B cell (primary cell): ENCODE measurements at regions of chr12 and their contacts with region 1.

Region 1: GRCh38 chr12:106247674-106248311 is at the start of gene CKAP4:
- DNase-seq: peak; percentile 80
- ATAC-seq: peak; percentile 61
- H3K4me3 ChIP-seq: peak within 1 kb of the TSS; percentile 53 to 77 (median 71)
- H3K4me3 Mint-ChIP-seq: peak within 1 kb of the TSS; percentile 85
- H3K27ac ChIP-seq: peak within 1 kb of the TSS; percentile 73 to 85
- H3K27ac Mint-ChIP-seq: peak within 1 kb of the TSS; percentile 88
- H3K4me1 ChIP-seq: peaks cover 36 to 52% of the 10 kb centered on the region in 2 donors
- H3K4me1 Mint-ChIP-seq: peaks cover 58% of the 10 kb centered on the region
- H3K27me3 ChIP-seq: peaks cover 0 to 16% (median 4%) of the 10 kb centered on the region in 4 experiments
- H3K27me3 Mint-ChIP-seq: no peaks in the 10 kb centered on the region
- CTCF ChIP-seq: no peak
- total RNA-seq, gene CKAP4: 27.3 and 29.2 TPM in 2 replicates

Region 2: GRCh38 chr12:106170285-106170684 is 77.5 kb before region 1 on chr12:
- CTCF ChIA-PET with region 1: no interaction called
- POLR2A ChIA-PET with region 1: no interaction called
- intact Hi-C with region 1: no loop called
- DNase-seq: no peak
- ATAC-seq: no peak
- H3K4me3 ChIP-seq: no peak overlapping the region
- H3K4me3 Mint-ChIP-seq: no peak overlapping the region
- H3K27ac ChIP-seq: no peak overlapping the region
- H3K27ac Mint-ChIP-seq: no peak overlapping the region
- H3K4me1 ChIP-seq: no peaks in the 10 kb centered on the region
- H3K4me1 Mint-ChIP-seq: no peaks in the 10 kb centered on the region
- H3K27me3 ChIP-seq: no peaks in the 10 kb centered on the region
- H3K27me3 Mint-ChIP-seq: peaks cover 17% of the 10 kb centered on the region
- CTCF ChIP-seq: no peak

Region 3: DNA sequence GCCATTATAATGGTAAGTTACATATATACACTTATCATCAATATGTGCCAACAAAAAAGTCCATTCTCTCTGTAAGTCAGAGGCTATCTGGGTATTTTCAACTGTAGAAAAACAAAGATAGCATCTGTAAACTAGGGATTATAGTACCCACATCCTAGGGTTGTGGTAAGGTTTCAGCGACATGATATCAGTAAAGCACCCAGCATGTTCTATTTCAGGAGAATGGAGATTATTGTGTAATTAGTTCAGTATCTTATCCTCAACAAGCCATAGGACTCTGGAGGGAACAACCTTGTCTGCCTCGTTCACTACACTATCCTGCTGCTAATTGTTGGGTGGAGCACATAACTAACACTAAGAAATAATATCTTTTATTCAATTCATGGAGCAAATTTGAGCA is 19.7 kb after region 1 on chr12:
- CTCF ChIA-PET with region 1: interaction called, 4 read pairs
- POLR2A ChIA-PET with region 1: interaction called, 4 read pairs
- intact Hi-C with region 1: loop called (anchors 2 kb)
- DNase-seq: no peak
- ATAC-seq: no peak
- H3K4me3 ChIP-seq: no peak overlapping the region
- H3K4me3 Mint-ChIP-seq: no peak overlapping the region
- H3K27ac ChIP-seq: no peak overlapping the region
- H3K27ac Mint-ChIP-seq: no peak overlapping the region
- H3K4me1 ChIP-seq: no peaks in the 10 kb centered on the region
- H3K4me1 Mint-ChIP-seq: no peaks in the 10 kb centered on the region
- H3K27me3 ChIP-seq: peaks cover 0 to 15% (median 4%) of the 10 kb centered on the region in 4 experiments
- H3K27me3 Mint-ChIP-seq: peaks cover under 1% of the 10 kb centered on the region
- CTCF ChIP-seq: no peak

Region 4: DNA sequence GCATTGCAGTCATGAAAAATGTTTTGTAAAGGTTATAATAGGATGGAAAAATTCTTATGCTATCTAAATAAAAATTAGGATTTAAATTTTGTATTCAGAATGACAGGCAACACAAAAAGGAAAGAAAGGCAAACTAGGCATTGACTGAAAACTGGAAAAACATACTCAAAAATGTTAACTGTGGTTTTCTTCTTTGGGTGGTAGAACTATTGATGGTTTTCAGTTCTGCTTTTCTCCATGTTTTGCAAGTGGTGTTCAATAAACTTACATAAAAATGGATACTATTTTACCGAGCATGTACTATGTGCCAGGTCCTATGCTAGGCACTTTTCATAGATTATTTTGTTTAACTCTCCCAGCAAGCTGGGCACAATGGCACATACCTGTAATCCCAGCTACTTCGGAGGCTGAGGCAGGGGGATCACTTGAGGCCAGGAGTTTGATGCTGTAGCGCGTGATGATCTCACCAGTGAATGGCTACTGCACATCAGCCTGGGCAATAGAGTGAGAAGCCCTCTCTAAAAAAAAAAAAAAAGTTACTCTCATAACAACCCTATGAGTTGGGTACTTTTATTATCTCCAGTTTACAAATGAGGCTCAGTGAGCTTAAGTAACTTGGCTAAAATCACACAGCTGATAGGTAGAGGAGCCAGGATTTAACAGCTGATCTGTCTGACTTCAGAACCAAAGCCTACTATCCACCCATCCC is 28.4 kb after region 1 on chr12:
- CTCF ChIA-PET with region 1: interaction called, 25 read pairs
- POLR2A ChIA-PET with region 1: interaction called, 5 read pairs
- intact Hi-C with region 1: loop called (anchors 1 kb)
- DNase-seq: peak; percentile 20
- ATAC-seq: peak; percentile 93
- H3K4me3 ChIP-seq: peak overlapping the region in 3 of 5 experiments; percentile 13 to 45 (median 28)
- H3K4me3 Mint-ChIP-seq: peak overlapping the region; percentile 89
- H3K27ac ChIP-seq: no peak overlapping the region
- H3K27ac Mint-ChIP-seq: peak overlapping the region; percentile 96
- H3K4me1 ChIP-seq: peaks cover 18 to 19% of the 10 kb centered on the region in 2 donors
- H3K4me1 Mint-ChIP-seq: peaks cover 41% of the 10 kb centered on the region
- H3K27me3 ChIP-seq: no peaks in the 10 kb centered on the region
- H3K27me3 Mint-ChIP-seq: no peaks in the 10 kb centered on the region
- CTCF ChIP-seq: no peak

Region 5: GRCh38 chr12:106282457-106283097 is 34.8 kb after region 1 on chr12:
- CTCF ChIA-PET with region 1: interaction called, 58 read pairs
- POLR2A ChIA-PET with region 1: interaction called, 4 read pairs
- intact Hi-C with region 1: loop called (anchors 1 kb)
- DNase-seq: peak; percentile 75
- ATAC-seq: peak; percentile 82
- H3K4me3 ChIP-seq: no peak overlapping the region
- H3K4me3 Mint-ChIP-seq: no peak overlapping the region
- H3K27ac ChIP-seq: no peak overlapping the region
- H3K27ac Mint-ChIP-seq: peak overlapping the region; percentile 2
- H3K4me1 ChIP-seq: peaks cover 7 to 8% of the 10 kb centered on the region in 2 donors
- H3K4me1 Mint-ChIP-seq: peaks cover 37% of the 10 kb centered on the region
- H3K27me3 ChIP-seq: peaks cover 0 to 11% (median 0%) of the 10 kb centered on the region in 4 experiments
- H3K27me3 Mint-ChIP-seq: peaks cover 20% of the 10 kb centered on the region
- CTCF ChIP-seq: peak; percentile 88

Region 6: GRCh38 chr12:106955377-106956047 is 707.7 kb after region 1 on chr12 and contains the start of gene TMEM263:
- CTCF ChIA-PET with region 1: no interaction called
- POLR2A ChIA-PET with region 1: interaction called, 12 read pairs
- intact Hi-C with region 1: no loop called
- DNase-seq: peak; percentile 94
- ATAC-seq: peak; percentile 84
- H3K4me3 ChIP-seq: peak within 1 kb of the TSS; percentile 67 to 89 (median 88)
- H3K4me3 Mint-ChIP-seq: peak within 1 kb of the TSS; percentile 99
- H3K27ac ChIP-seq: peak within 1 kb of the TSS; percentile 49 to 57
- H3K27ac Mint-ChIP-seq: peak within 1 kb of the TSS; percentile 93
- H3K4me1 ChIP-seq: peaks cover 9 to 12% of the 10 kb centered on the region in 2 donors
- H3K4me1 Mint-ChIP-seq: peaks cover 20% of the 10 kb centered on the region
- H3K27me3 ChIP-seq: no peaks in the 10 kb centered on the region
- H3K27me3 Mint-ChIP-seq: no peaks in the 10 kb centered on the region
- CTCF ChIP-seq: no peak
- total RNA-seq, gene TMEM263: 23.5 and 26.7 TPM in 2 replicates